Gastrocnemius medialis (tissue), 4 donors: ENCODE measurements at regions of chr2 and their contacts with region 1.

Region 1: DNA sequence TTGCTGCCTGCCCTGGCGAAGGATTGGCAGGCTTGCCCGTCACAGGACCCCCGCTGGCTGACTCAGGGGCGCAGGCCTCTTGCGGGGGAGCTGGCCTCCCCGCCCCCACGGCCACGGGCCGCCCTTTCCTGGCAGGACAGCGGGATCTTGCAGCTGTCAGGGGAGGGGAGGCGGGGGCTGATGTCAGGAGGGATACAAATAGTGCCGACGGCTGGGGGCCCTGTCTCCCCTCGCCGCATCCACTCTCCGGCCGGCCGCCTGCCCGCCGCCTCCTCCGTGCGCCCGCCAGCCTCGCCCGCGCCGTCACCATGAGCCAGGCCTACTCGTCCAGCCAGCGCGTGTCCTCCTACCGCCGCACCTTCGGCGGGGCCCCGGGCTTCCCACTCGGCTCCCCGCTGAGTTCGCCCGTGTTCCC is at the start of gene DES:
- DNase-seq: peak; percentile 87 to 94
- ATAC-seq: peak; percentile 47 to 55
- H3K4me3 ChIP-seq: peak within 1 kb of the TSS; percentile 75 to 95 (median 83)
- H3K27ac ChIP-seq: peak within 1 kb of the TSS; percentile 95 to 100 (median 98)
- H3K4me1 ChIP-seq: peaks cover 52 to 62% of the 10 kb centered on the region in 2 donors
- H3K27me3 ChIP-seq: no peaks in the 10 kb centered on the region
- CTCF ChIP-seq: no peak
- POLR2A ChIP-seq: peak; percentile 94 to 98
- total RNA-seq, gene DES: 19,008 to 28,635 (median 23,575) TPM

Region 2: DNA sequence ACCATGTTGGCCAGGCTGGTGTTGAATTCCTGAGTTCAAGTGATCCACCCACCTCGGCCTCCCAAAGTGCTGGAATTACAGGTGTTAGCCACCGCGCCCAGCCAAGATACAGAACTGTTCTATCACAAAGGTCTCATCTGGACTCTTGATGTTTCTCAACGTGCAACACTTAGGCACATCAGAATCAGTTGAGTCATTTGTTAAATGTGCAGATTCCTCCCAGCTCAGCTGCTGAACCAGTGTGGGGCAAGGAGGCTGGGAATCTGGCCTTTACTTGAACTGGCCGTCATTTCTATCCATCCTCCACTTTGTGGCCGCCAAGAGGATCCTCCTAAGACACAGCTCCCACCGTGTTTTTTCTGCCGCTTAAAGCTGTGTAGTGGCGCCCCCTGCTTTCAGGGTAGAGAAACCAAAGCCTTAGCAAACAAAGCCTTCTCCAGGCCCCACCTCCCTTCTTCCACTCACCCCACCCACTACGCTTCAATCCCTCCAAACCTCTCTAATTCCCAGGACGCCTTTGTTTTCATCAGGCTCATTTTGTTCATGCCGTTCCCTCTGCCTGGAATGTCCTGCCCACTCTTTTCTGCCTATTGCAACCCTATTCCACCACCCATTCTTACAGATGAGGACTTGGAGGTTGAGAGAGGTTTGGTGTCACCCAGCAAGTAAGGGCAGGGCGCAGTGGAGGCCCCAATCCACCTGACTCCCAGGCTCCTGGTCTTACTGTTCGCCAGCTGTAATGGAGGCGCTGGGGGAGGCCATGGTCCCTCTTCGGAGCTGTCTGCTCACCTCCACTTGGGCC is 15.7 kb after region 1 on chr2:
- in situ Hi-C with region 1: no loop called
- intact Hi-C with region 1: loop called (anchors 2 kb)
- DNase-seq: peak; percentile 56 to 89
- ATAC-seq: peak; percentile 45 to 53
- H3K4me3 ChIP-seq: peak overlapping the region; percentile 62 to 78 (median 68)
- H3K27ac ChIP-seq: peak overlapping the region; percentile 95 to 100 (median 98)
- H3K4me1 ChIP-seq: peaks cover 55 to 64% of the 10 kb centered on the region in 2 donors
- H3K27me3 ChIP-seq: no peaks in the 10 kb centered on the region
- CTCF ChIP-seq: peak; percentile 43 to 79 (median 54)
- POLR2A ChIP-seq: no peak

Region 3: GRCh38 chr2:219591091-219591490 is 172.9 kb after region 1 on chr2:
- in situ Hi-C with region 1: no loop called
- intact Hi-C with region 1: no loop called
- DNase-seq: no peak
- ATAC-seq: no peak
- H3K4me3 ChIP-seq: no peak overlapping the region
- H3K27ac ChIP-seq: no peak overlapping the region
- H3K4me1 ChIP-seq: no peaks in the 10 kb centered on the region
- H3K27me3 ChIP-seq: no peaks in the 10 kb centered on the region
- CTCF ChIP-seq: no peak
- POLR2A ChIP-seq: no peak

Region 4: DNA sequence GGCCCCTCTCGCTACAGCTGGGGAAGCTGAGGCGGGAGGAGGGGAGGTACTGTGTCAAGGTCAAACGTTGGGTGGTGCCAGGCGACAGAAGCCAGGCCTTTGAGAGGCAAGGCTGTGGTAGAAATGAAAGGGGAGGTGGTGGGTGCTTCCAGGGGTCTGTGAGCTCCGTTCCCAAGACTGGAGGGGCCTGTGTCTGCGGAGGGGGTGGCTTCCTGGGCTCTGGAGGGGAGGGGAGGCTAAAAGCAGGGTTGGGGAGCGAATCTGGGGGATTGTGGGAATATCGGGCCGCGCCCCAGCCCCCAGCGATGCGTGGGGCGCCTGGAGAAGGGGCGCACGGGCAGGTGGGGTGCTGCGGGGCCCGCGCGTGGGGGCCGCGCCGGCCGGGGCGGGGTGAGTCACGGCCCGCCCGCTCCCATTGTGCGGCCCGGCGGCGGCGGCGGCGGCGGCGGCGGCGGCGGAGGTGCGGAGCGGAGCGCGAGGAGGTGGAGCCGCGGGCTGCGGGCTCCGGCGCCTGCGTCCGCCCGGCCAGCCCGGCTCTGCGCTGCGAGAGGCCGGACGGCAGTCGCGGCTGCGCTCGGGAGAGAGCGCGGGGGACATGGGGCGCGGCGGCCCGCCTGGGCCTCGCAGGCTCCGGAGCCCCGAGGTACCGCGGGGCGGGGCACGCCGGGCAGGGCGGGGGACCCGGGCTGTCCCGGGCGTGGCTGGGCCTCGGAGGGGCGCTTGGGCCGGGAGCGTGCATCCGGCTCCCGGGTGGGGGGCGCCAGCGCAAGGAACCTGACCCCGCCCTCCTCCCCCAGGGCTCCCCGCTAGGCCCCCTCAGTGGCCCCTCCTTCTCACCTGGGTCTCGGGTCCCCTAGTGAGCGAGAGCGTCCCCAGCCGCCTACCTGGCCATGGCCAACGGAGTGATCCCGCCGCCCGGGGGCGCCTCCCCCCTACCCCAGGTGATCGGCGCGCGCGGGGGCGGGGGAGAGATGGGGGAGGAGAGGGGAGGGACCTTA is 209.2 kb after region 1 on chr2 and contains the start of gene SLC4A3:
- in situ Hi-C with region 1: no loop called
- intact Hi-C with region 1: no loop called
- DNase-seq: no peak
- ATAC-seq: peak; percentile 54 to 56
- H3K4me3 ChIP-seq: peak within 1 kb of the TSS; percentile 40 to 55 (median 49)
- H3K27ac ChIP-seq: no peak within 1 kb of the TSS
- H3K4me1 ChIP-seq: peaks cover 3 to 4% of the 10 kb centered on the region in 2 donors
- H3K27me3 ChIP-seq: no peaks in the 10 kb centered on the region
- CTCF ChIP-seq: no peak
- POLR2A ChIP-seq: no peak
- total RNA-seq, gene SLC4A3: 0.25 to 0.35 (median 0.29) TPM in 3 of 4 donors, not detected in the other